ENCODE measurements at regions of chr12 and their contacts with region 1.

Region 1: GRCh38 chr12:57309420-57309819 is 58.4 kb upstream of the STAC3 start:
- DNase-seq: peak; percentile 52
- ATAC-seq: peak; percentile 55
- H3K4me3 ChIP-seq: no peak overlapping the region
- H3K27ac ChIP-seq: no peak overlapping the region
- H3K4me1 ChIP-seq: peaks cover 6% of the 10 kb centered on the region
- H3K27me3 ChIP-seq: no peaks in the 10 kb centered on the region
- CTCF ChIP-seq: no peak
- POLR2A ChIP-seq: no peak
- RAD21 ChIP-seq: no peak

Region 2: DNA sequence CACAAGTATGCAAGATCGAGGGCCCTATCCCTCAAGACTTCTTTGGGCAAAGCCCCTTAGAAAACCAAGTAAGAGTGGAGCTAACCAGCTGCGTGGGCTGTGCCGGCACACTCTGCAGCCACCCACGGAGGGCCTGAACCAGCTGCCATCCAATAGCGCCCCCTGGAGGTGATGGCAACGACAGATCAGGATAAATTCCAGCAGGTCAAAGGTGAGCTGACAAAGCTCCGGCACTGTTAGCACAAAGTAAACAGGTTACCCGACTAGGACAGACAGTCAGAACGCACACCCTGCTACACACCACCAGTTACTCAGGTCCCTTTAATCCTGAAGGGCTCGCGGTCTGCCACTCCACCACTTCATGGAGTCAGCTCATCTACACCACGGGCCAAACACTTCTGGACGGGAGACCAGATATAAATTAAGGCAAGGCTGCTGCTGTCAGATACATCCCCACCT is 307.9 kb before region 1 on chr12:
- CTCF ChIA-PET with region 1: no interaction called
- POLR2A ChIA-PET with region 1: no interaction called
- dilution Hi-C with region 1: no loop called
- in situ Hi-C with region 1: no loop called
- intact Hi-C with region 1: no loop called
- DNase-seq: peak; percentile 60
- ATAC-seq: peak; percentile 48
- H3K4me3 ChIP-seq: no peak overlapping the region
- H3K27ac ChIP-seq: no peak overlapping the region
- H3K4me1 ChIP-seq: peaks cover 6% of the 10 kb centered on the region
- H3K27me3 ChIP-seq: no peaks in the 10 kb centered on the region
- CTCF ChIP-seq: peak; percentile 78
- POLR2A ChIP-seq: no peak
- RAD21 ChIP-seq: peak; percentile 70

Region 3: DNA sequence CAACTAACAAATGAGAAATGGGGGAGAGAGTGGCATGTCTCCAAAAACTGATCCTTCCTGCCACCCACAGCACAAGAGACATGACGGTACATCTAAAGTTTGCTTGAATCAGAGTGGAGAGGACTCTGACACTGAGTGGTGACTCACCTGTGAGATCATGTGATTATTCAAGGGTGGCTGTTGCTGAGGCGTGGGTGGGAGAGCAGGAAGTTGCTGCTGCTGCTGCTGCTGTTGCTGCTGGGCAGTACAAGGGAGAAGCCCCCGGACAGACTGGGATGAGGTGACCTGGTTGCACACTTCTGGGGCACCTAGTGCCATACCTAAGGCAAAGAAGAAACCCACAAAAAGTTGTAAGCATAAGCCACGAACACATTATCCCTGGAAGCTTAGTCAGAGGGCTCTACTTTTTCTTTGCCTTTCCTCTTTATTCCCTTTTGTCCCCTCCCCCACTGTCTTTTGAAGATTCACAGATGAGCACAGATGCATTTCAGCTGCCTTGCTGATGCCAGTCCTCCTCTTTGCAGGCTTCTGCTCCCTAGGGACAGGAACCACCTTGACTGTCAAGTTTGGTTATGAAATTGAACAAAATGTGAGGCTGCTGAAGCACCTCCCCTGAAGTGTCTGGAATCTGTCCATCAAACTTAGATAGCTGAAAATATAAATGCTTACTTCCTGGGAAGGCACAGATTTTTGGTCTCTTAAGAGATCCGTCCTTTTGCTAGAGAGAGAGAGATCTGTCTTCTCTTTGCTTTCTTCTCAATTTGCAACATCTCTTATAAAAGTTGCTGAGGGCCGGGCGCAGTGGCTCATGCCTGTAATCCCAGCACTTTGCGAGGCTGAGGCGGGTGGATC is 29.0 kb before region 1 on chr12:
- CTCF ChIA-PET with region 1: interaction called, 5 read pairs
- POLR2A ChIA-PET with region 1: interaction called, 6 read pairs
- dilution Hi-C with region 1: no loop called
- in situ Hi-C with region 1: no loop called
- intact Hi-C with region 1: loop called (anchors 1 kb)
- DNase-seq: peak; percentile 99
- ATAC-seq: peak; percentile 86
- H3K4me3 ChIP-seq: peak overlapping the region; percentile 5; the same call in 1 of the 2 replicates
- H3K27ac ChIP-seq: peak overlapping the region; percentile 87
- H3K4me1 ChIP-seq: peaks cover 5% of the 10 kb centered on the region
- H3K27me3 ChIP-seq: no peaks in the 10 kb centered on the region
- CTCF ChIP-seq: no peak
- POLR2A ChIP-seq: peak; percentile 60; the same call in 1 of the 2 replicates
- RAD21 ChIP-seq: no peak

Region 4: GRCh38 chr12:57430931-57431720 is 121.7 kb after region 1 on chr12 and contains the start of gene R3HDM2:
- CTCF ChIA-PET with region 1: interaction called, 8 read pairs
- POLR2A ChIA-PET with region 1: interaction called, 4 read pairs
- dilution Hi-C with region 1: no loop called
- in situ Hi-C with region 1: no loop called
- intact Hi-C with region 1: loop called (anchors 5 kb)
- DNase-seq: peak; percentile 96
- ATAC-seq: peak; percentile 96
- H3K4me3 ChIP-seq: peak within 1 kb of the TSS; percentile 98
- H3K27ac ChIP-seq: peak within 1 kb of the TSS; percentile 96
- H3K4me1 ChIP-seq: peaks cover 3% of the 10 kb centered on the region
- H3K27me3 ChIP-seq: no peaks in the 10 kb centered on the region
- CTCF ChIP-seq: no peak
- POLR2A ChIP-seq: peak; percentile 88
- RAD21 ChIP-seq: no peak
- total RNA-seq, gene R3HDM2: 6.1 and 7.5 TPM in 2 replicates

Region 5: GRCh38 chr12:57452937-57453509 is 143.6 kb after region 1 on chr12:
- CTCF ChIA-PET with region 1: interaction called, 42 read pairs
- POLR2A ChIA-PET with region 1: interaction called, 6 read pairs
- dilution Hi-C with region 1: no loop called
- in situ Hi-C with region 1: loop called (anchors 5 kb)
- intact Hi-C with region 1: loop called (anchors 1 kb)
- DNase-seq: peak; percentile 84
- ATAC-seq: peak; percentile 77
- H3K4me3 ChIP-seq: no peak overlapping the region
- H3K27ac ChIP-seq: peak overlapping the region; percentile 53; the same call in 1 of the 2 replicates
- H3K4me1 ChIP-seq: peaks cover 33% of the 10 kb centered on the region
- H3K27me3 ChIP-seq: no peaks in the 10 kb centered on the region
- CTCF ChIP-seq: peak; percentile 98
- POLR2A ChIP-seq: no peak; the same call in 1 of the 2 replicates
- RAD21 ChIP-seq: peak; percentile 98

Region 6: DNA sequence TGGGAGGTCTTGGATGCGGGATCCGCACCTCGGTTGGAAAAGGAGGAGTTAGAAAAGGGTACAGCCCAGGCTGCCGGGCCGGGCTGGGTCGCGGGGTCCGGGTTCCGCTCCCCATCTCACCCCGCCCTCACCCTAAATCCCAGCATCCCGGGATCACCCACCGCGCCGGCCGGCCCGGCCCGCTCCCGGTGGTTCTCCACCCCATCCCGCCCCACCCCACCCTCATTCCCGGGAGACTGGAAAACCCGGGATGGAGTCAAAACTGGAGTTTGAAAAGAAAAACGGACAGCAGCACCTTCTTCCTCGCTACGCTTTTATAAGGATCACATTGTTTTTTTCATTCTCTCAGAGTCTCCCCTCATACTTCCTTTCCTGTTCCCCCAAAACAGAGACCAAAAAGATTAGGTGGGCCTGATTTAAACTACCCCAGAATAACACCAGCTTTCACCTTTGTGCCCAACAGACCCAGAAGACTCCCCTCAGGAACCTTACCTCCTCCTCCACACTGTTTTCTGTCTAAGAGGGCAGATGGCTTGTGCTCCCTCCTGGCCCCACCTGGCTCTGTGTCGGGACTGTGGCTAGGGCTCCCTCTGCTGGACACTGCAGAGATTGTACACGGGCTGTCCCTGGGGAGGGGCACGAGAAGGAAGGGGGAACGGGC is 153.0 kb after region 1 on chr12:
- CTCF ChIA-PET with region 1: interaction called, 10 read pairs
- POLR2A ChIA-PET with region 1: no interaction called
- dilution Hi-C with region 1: no loop called
- in situ Hi-C with region 1: no loop called
- intact Hi-C with region 1: no loop called
- DNase-seq: peak; percentile 82
- ATAC-seq: peak; percentile 72
- H3K4me3 ChIP-seq: peak overlapping the region; percentile 56
- H3K27ac ChIP-seq: peak overlapping the region; percentile 67
- H3K4me1 ChIP-seq: peaks cover 7% of the 10 kb centered on the region
- H3K27me3 ChIP-seq: 0 out of 2 replicates have a peak, but pooled peaks cover 2% of the 10 kb centered on the region
- CTCF ChIP-seq: peak; percentile 94
- POLR2A ChIP-seq: no peak
- RAD21 ChIP-seq: peak; percentile 79

Region 7: GRCh38 chr12:57543581-57543980 is 234.2 kb after region 1 on chr12:
- CTCF ChIA-PET with region 1: no interaction called
- POLR2A ChIA-PET with region 1: no interaction called
- dilution Hi-C with region 1: no loop called
- in situ Hi-C with region 1: no loop called
- intact Hi-C with region 1: no loop called
- DNase-seq: peak; percentile 18
- ATAC-seq: no peak
- H3K4me3 ChIP-seq: no peak overlapping the region
- H3K27ac ChIP-seq: no peak overlapping the region
- H3K4me1 ChIP-seq: peaks cover 13% of the 10 kb centered on the region
- H3K27me3 ChIP-seq: peaks cover 4% of the 10 kb centered on the region
- CTCF ChIP-seq: no peak
- POLR2A ChIP-seq: no peak
- RAD21 ChIP-seq: no peak